Tibial artery (tissue), 4 donors: ENCODE measurements at regions of chr16 and their contacts with region 1.

Region 1: DNA sequence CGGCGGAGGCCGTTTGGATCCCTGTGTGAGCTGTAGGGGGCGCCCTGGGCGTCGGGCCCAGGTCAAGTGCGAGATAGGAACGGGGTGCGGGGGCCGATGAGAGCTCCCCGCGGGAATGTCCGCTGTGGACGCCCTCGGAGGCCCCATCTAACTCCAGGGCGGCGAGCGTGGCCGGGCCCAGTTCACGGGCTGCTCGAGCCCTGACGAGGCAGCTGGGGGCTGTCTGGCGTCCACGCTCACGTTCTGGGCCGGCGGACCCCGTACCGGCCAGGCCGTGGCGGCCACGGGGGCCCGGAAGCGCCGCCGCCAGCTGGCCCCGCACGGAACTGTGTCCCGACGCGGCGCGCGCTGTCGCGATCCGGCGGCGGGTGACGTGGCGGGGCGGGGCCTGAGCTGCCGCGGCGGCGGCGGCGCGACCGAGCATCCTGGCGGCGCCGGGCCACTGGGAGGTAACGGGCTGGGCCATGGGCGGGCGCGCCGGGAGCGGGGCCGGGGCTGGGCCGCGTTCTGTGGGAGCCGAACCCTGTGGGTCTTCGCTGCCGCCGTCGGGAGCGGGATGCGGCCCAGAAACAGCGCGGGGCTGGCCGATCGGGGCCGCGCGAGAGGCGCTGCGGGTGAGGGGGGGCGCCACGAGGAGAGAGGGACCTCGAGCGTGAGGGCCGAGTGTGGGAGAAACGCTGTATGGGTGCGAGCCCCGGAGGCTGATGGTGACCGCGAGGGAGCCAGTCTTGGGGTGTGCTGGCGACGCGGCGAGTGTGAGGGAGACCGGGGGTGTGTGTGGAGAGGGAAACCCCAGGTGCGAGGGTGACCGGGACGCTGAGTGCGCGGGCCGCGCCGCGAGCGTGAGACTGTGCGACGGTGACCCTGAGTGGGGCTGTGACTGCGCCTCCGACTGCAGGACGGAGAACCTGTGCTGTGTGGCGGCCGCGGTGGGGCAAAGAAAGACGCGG is at the start of gene SLC7A6:
- DNase-seq: peak; percentile 72 to 84
- H3K4me3 ChIP-seq: peak within 1 kb of the TSS; percentile 73 to 83
- H3K27ac ChIP-seq: peak within 1 kb of the TSS; percentile 89 to 96
- H3K4me1 ChIP-seq: peaks cover 0 to 31% (median 15%) of the 10 kb centered on the region in 4 donors
- H3K27me3 ChIP-seq: no peaks in the 10 kb centered on the region
- CTCF ChIP-seq: peak; percentile 57 to 75

Region 2: DNA sequence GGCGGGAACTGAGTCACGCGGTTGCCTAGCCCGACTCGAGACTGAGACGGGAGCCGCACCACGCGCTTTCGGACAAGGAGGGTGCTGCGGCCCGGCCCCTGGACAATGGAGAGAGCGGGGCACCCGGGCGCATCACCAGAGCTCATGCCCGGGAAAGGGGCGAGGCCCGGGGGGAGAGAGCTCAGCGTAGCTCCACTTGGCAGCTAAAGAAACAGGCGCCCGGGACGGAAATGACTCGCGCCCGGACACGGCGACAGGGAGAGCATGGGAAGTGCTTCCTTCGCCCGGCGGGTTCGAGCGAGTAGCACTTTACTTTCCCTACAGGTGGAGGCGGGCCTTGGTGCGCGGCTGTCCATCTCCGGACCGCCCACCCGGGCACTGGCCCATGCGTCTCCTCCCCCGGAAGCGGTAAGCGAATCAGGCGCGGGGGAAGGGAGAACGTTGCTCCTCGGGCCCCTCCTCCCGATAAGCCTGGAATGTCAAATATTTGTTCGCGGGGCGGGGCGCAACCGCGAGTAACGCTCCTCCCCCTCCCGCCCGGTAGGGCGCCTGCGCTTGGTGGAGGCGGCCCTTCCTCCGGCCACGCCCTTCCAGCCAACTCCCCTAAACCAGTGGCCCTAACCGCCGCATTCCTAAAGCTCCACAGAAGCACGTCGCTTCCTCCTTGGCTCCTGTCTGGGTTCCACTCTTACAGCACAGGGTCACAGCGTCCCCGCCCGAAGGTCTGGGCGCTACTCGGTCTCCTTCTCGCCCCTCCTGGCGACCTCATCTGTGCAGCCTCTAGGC is 27.0 kb before region 1 on chr16:
- intact Hi-C with region 1: loop called (anchors 2 kb)
- DNase-seq: peak; percentile 98 to 99
- H3K4me3 ChIP-seq: peak overlapping the region; percentile 60 to 88
- H3K27ac ChIP-seq: peak overlapping the region; percentile 84 to 86
- H3K4me1 ChIP-seq: peaks cover 0 to 41% (median 23%) of the 10 kb centered on the region in 4 donors
- H3K27me3 ChIP-seq: no peaks in the 10 kb centered on the region
- CTCF ChIP-seq: peak in 1 of 2 experiments; percentile 6

Region 3: GRCh38 chr16:68298907-68299561 is 34.6 kb after region 1 on chr16:
- intact Hi-C with region 1: no loop called
- DNase-seq: peak; percentile 58 to 77
- H3K4me3 ChIP-seq: no peak overlapping the region
- H3K27ac ChIP-seq: peak overlapping the region; percentile 20 to 39
- H3K4me1 ChIP-seq: peaks cover 0 to 13% (median 4%) of the 10 kb centered on the region in 4 donors
- H3K27me3 ChIP-seq: no peaks in the 10 kb centered on the region
- CTCF ChIP-seq: no peak

Region 4: GRCh38 chr16:68310761-68311511 is 46.5 kb after region 1 on chr16 and contains the starts of genes PRMT7 and SLC7A6OS:
- intact Hi-C with region 1: loop called (anchors 1 kb)
- DNase-seq: peak; percentile 91 to 92
- H3K4me3 ChIP-seq: peak within 1 kb of the TSS; percentile 64 to 91
- H3K27ac ChIP-seq: peak within 1 kb of the TSS; percentile 71 to 79
- H3K4me1 ChIP-seq: peaks cover 0 to 40% (median 22%) of the 10 kb centered on the region in 4 donors
- H3K27me3 ChIP-seq: no peaks in the 10 kb centered on the region
- CTCF ChIP-seq: peak in 1 of 2 experiments; percentile 25

Region 5: DNA sequence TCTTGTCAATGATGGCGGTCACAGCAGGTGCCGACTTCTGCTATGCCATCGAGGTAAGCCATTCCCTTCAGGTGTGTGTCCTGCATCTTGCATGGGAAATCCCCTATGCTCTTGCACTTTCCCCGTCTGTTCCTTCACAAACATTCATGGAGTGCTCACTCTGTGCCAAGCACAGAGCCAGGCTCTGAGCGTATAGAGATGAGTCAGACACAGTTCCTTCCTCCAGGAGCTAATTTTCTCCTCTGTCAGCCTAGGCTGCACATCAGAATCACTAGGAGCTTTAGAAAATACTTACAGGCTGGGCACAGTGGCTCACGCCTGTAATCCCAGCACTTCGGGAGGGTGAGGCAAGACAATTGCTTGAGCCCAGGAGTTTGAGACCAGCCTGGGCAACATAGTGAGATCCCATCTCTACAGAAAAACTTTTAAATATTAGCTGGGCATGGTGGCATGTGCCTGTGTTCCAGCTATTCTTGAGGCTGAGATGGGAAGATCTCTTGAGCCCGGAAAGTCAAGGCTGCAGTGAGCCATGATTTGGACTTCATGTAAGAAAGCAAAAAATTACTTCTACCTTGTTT is 60.5 kb after region 1 on chr16:
- intact Hi-C with region 1: loop called (anchors 1 kb)
- DNase-seq: no peak
- H3K4me3 ChIP-seq: no peak overlapping the region
- H3K27ac ChIP-seq: no peak overlapping the region
- H3K4me1 ChIP-seq: no peaks in the 10 kb centered on the region
- H3K27me3 ChIP-seq: no peaks in the 10 kb centered on the region
- CTCF ChIP-seq: no peak